Activated CD8-positive, alpha-beta memory T cell treated with anti-CD3 and anti-CD28 coated beads, Interleukin-2, amount 10 ng/mL, durations not matched to agents 7 days and 5 days (primary cell): ENCODE measurements at regions of chr7 and their contacts with region 1.

Region 1: GRCh38 chr7:15015545-15016326 is 113.2 kb upstream of the DGKB start:
- DNase-seq: no peak
- ATAC-seq: peak; percentile 60
- H3K4me3 Mint-ChIP-seq: no peak overlapping the region
- H3K27ac Mint-ChIP-seq: no peak overlapping the region
- H3K4me1 Mint-ChIP-seq: no peaks in the 10 kb centered on the region
- H3K27me3 Mint-ChIP-seq: no peaks in the 10 kb centered on the region

Region 2: DNA sequence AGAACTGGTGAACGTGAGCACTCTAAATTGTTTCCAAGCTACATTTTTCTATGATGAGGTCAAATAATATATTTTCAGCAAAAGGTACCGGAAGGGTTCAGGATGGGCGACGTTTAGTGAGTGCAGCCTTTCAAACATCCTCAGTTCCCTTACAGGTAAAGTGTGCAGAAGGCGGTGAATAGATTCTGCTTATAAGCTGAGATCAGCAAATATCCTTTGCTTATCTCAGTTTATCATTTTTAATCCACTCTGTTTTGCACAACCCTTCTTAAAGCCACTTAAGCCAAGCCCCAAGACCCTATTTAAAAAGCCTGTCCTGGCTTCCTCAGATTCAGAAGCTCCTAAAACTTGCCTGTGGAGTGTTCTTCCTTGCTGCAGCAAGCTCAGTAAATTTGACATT is 10.1 kb before region 1 on chr7:
- CTCF ChIA-PET with region 1: interaction called, 11 read pairs
- DNase-seq: no peak
- ATAC-seq: no peak
- H3K4me3 Mint-ChIP-seq: no peak overlapping the region
- H3K27ac Mint-ChIP-seq: no peak overlapping the region
- H3K4me1 Mint-ChIP-seq: no peaks in the 10 kb centered on the region
- H3K27me3 Mint-ChIP-seq: no peaks in the 10 kb centered on the region